HEK293 (cell line): ENCODE measurements at regions of chr19 and their contacts with region 1.

Region 1: GRCh38 chr19:8513687-8514504 is at the start of gene ZNF414:
- H3K4me3 ChIP-seq: peak within 1 kb of the TSS; percentile 99
- H3K27ac ChIP-seq: peak within 1 kb of the TSS; percentile 87
- H3K4me1 ChIP-seq: peaks cover 7% of the 10 kb centered on the region; the same call in 1 of the 2 replicates
- CTCF ChIP-seq: no peak

Region 2: GRCh38 chr19:8526345-8527067 is 12.6 kb after region 1 on chr19:
- CTCF ChIA-PET with region 1: interaction called, 3 read pairs
- POLR2A ChIA-PET with region 1: interaction called, 82 read pairs
- H3K4me3 ChIP-seq: peak overlapping the region; percentile 70
- H3K27ac ChIP-seq: peak overlapping the region; percentile 44; the same call in 1 of the 2 replicates
- H3K4me1 ChIP-seq: no peaks in the 10 kb centered on the region
- CTCF ChIP-seq: no peak

Region 3: DNA sequence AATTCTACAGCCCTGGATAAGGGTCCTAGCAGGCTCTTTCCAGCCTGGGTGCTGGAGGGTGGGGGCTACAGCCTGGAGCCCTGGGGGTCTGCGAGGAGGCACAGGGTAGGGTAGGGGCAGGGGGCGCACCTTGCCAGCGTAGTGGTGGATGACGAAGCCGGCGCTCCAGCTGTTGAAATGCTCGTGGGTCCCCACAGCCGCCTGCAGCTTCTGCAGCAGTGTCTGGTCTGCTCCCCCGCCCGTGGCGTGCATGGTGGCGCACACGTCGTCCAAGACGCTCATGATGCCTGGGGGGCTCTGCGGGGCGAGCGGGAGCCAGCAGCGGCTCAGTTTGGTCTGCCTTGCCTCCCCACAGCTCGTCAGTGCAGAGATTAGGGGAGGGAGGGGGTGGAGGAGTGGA is 30.3 kb after region 1 on chr19:
- CTCF ChIA-PET with region 1: no interaction called
- POLR2A ChIA-PET with region 1: no interaction called
- H3K4me3 ChIP-seq: no peak overlapping the region
- H3K27ac ChIP-seq: no peak overlapping the region
- H3K4me1 ChIP-seq: no peaks in the 10 kb centered on the region
- CTCF ChIP-seq: no peak

Region 4: GRCh38 chr19:8589177-8589714 is 75.3 kb after region 1 on chr19:
- CTCF ChIA-PET with region 1: no interaction called
- POLR2A ChIA-PET with region 1: no interaction called
- H3K4me3 ChIP-seq: no peak overlapping the region
- H3K27ac ChIP-seq: no peak overlapping the region
- H3K4me1 ChIP-seq: no peaks in the 10 kb centered on the region
- CTCF ChIP-seq: no peak